CD4-positive, alpha-beta memory T cell (primary cell): ENCODE measurements at regions of chr17 and their contacts with region 1.

Region 1: GRCh38 chr17:34171245-34171818 is 83.8 kb upstream of the CCL2 start:
- DNase-seq: peak; percentile 22 to 55 (median 35)
- H3K4me3 ChIP-seq: no peak overlapping the region
- H3K4me3 Mint-ChIP-seq: no peak overlapping the region
- H3K27ac ChIP-seq: no peak overlapping the region
- H3K27ac Mint-ChIP-seq: no peak overlapping the region
- H3K4me1 ChIP-seq: no peaks in the 10 kb centered on the region
- H3K4me1 Mint-ChIP-seq: no peaks in the 10 kb centered on the region
- H3K27me3 ChIP-seq: no peaks in the 10 kb centered on the region
- H3K27me3 Mint-ChIP-seq: peaks cover 5 to 32% of the 10 kb centered on the region in 2 donors

Region 2: DNA sequence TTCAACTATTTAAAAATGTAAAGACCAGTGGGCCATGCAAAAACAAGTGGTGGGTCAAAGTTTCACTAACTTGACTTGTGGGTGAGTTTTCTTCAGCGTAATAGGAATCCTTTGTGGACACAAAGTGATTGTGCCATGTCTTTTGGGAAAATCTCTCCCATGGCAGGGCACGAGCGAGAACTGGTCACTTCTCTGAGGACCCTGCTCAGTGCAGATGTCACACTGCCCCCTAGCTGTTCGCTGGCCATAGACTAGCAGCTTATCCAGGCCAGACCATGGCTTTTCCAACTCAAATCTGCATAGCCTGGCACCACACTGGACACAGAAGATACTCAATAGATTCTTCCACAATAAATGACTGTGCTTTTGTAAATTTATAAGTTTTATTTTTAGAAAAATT is 222.2 kb before region 1 on chr17:
- CTCF ChIA-PET with region 1: no interaction called
- POLR2A ChIA-PET with region 1: no interaction called
- intact Hi-C with region 1: no loop called
- DNase-seq: no peak
- H3K4me3 ChIP-seq: no peak overlapping the region
- H3K4me3 Mint-ChIP-seq: no peak overlapping the region
- H3K27ac ChIP-seq: no peak overlapping the region
- H3K27ac Mint-ChIP-seq: no peak overlapping the region
- H3K4me1 ChIP-seq: no peaks in the 10 kb centered on the region
- H3K4me1 Mint-ChIP-seq: no peaks in the 10 kb centered on the region
- H3K27me3 ChIP-seq: no peaks in the 10 kb centered on the region
- H3K27me3 Mint-ChIP-seq: peaks cover 0 to 5% of the 10 kb centered on the region in 2 donors

Region 3: DNA sequence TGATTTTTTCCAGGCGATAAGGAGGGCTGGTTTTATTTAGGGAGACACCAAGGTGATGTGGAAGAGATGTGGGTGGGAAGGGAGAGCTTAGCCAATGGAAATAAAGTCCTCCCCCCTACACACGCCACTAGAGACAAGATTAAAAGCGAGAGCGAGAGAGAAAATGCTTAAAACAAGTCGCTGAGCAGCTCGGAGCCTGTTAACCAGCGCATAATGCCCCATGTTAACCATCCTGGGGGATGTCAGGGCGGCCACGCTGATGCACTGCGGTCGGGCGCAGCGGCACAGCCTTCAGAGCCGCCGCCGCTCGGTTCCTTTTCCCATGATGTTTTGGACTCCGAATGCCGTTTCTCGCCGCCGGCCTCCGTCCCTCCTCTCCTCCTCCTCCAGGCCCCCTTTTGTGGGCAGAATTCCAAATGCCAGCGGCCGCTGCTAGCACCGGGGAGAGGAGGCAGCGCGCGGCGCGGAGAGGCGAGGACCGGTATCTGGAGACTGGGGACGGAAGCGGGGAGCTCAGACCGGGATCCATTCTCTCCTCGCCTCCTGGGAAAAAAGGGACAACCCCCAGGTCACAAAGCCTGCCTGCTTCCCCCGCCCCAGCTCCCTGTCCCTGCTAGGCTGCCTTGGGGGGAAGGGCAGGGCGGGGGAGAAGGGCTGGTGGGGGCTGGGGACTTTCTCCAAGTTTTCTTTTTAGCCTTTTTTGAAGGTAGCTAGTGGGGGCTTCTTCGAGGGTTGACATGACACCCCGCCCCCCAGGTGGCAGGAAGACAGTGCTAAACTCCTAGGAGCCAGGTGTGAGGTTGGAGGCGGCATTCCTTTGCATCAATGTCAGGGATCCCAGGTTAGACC is 14.4 kb before region 1 on chr17:
- CTCF ChIA-PET with region 1: interaction called, 16 read pairs
- POLR2A ChIA-PET with region 1: no interaction called
- intact Hi-C with region 1: no loop called
- DNase-seq: no peak
- H3K4me3 ChIP-seq: no peak overlapping the region
- H3K4me3 Mint-ChIP-seq: no peak overlapping the region
- H3K27ac ChIP-seq: no peak overlapping the region
- H3K27ac Mint-ChIP-seq: no peak overlapping the region
- H3K4me1 ChIP-seq: no peaks in the 10 kb centered on the region
- H3K4me1 Mint-ChIP-seq: peaks cover 1 to 7% (median 3%) of the 10 kb centered on the region in 4 donors
- H3K27me3 ChIP-seq: peaks cover 4% of the 10 kb centered on the region
- H3K27me3 Mint-ChIP-seq: peaks cover 36 to 52% of the 10 kb centered on the region in 2 donors